AG04449 (cell line): ENCODE measurements at regions of chr20 and their contacts with region 1.

Region 1: GRCh38 chr20:36773597-36774390 is at the start of gene DSN1:
- DNase-seq: peak; percentile 82
- H3K4me3 ChIP-seq: peak within 1 kb of the TSS; percentile 94
- CTCF ChIP-seq: no peak

Region 2: DNA sequence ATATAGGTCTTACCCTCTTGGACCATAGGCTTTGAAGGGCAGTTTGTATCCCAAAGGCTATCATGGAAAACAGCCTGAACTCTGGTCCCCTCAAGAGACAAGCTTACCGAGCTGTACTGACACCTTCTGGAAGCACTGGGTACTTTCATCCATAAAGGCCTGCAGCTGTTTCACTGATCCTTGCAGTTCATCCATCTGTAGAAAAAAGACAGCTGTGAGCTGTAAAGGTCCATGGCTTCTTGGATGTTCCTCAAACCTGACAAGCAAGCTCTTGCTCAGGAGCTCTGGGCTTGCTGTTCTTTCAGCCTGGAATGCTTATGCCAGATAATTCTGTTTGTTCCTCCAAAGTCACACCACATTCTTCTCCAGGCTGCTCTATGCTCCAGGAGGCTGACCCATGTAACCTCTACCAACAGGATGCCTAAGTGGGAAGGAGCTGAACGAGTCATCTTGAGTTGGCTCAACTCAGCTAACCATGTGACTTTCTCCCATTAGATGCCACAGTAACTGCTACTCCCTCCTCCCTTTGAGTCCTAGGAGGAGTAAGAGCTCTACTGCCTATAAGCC is 19.1 kb before region 1 on chr20:
- CTCF ChIA-PET with region 1: interaction called, 43 read pairs
- POLR2A ChIA-PET with region 1: no interaction called
- DNase-seq: peak; percentile 10
- H3K4me3 ChIP-seq: no peak overlapping the region
- CTCF ChIP-seq: peak; percentile 83

Region 3: DNA sequence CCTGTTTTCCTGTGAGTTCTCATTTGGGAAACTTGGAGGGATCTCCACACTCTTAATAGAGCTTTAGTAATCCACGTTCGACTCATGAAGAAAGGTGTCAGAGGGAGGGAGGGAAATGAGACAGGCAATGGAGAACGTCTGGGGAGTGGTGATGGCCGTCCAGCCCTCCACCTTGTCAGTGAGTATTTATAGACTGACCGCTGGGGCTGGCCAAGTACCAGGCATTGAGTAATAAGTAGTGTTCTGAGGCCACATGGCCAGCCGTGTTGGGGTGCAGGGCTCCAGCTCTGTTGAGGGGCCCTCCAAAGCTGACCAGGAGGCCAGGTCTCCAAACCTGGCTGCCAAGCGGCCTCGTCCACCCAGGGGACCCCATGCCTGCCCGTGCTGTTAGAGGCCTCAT is 11.1 kb after region 1 on chr20:
- CTCF ChIA-PET with region 1: interaction called, 23 read pairs
- POLR2A ChIA-PET with region 1: interaction called, 6 read pairs
- DNase-seq: no peak
- H3K4me3 ChIP-seq: no peak overlapping the region
- CTCF ChIP-seq: no peak

Region 4: DNA sequence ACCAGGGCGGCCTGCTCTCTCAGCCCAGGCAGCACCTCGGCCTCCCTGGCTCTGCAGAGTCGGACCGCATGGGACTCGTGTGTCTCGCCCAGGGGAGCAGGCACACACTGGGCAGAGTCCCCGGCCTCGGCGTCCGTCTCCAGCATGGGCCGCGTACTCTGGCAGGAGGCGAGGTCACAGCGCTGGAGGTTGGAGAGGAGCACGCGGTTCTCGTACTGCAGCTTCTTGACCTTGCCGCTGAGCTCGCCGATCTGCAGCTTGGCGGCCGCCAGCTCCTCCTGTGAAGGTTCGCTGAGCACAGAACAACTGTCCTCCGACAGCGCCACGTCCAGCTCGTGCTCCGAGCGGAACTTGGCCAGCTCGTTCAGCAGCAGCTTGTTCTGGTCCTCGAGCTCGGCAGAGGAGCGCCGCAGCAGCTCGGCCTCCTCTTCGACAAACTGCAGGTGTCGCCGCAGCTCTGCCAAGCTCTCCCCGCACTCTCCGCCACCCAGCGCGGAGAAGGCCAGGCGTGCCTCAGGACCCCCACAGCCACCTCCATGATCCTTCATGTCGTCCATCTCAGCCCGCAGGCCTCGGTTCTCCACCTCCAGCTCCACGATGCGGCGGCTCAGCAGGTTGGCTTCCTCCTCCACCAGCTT is 41.8 kb after region 1 on chr20:
- CTCF ChIA-PET with region 1: interaction called, 12 read pairs
- POLR2A ChIA-PET with region 1: no interaction called
- DNase-seq: no peak
- H3K4me3 ChIP-seq: no peak overlapping the region
- CTCF ChIP-seq: no peak

Region 5: DNA sequence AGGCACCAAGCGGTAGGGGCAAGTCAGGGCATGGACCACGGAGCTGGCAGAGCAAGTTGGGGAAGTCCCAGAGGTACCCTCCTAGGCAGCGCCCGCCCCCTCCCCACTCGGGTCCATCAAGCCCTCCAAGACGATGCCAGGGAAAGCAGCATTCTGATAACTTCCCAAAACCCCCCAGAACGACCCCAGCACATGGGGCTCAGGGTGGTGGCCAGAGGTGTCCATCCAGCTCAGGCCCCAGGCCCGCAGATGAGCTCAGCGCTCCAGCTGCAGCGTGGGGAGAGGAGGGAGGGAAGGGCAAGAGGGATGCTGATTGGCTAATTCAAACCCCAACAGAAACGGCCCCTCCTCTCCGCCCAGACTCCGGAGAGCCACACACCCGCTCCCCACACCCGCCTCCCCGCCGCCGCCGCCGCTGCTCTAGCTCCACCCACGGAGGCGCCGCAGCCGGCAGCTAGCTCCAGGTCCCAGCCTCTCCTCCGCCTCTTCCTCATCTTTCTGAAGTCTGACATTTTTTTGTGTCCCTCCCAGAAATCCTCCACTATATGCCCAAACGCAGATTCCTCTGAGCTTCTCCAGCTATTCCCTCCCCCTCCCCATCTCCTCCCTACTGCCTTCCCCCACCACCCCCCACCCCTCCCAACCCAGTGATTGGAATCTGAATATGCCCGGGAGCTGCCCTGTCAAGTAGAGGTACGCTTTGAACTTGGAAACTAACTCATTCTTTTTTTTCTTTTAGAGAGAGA is 61.8 kb after region 1 on chr20:
- CTCF ChIA-PET with region 1: interaction called, 10 read pairs
- POLR2A ChIA-PET with region 1: no interaction called
- DNase-seq: peak; percentile 63
- H3K4me3 ChIP-seq: peak overlapping the region; percentile 27
- CTCF ChIP-seq: no peak

Region 6: GRCh38 chr20:36861875-36862801 is 88.3 kb after region 1 on chr20:
- CTCF ChIA-PET with region 1: interaction called, 19 read pairs
- POLR2A ChIA-PET with region 1: interaction called, 6 read pairs
- DNase-seq: no peak
- H3K4me3 ChIP-seq: peak overlapping the region; percentile 69
- CTCF ChIP-seq: no peak

Region 7: GRCh38 chr20:36886859-36887751 is 113.3 kb after region 1 on chr20:
- CTCF ChIA-PET with region 1: interaction called, 11 read pairs
- POLR2A ChIA-PET with region 1: no interaction called
- DNase-seq: no peak
- H3K4me3 ChIP-seq: peak overlapping the region; percentile 43
- CTCF ChIP-seq: peak; percentile 94